ENCODE measurements at regions of chr21 and their contacts with region 1.

Region 1: GRCh38 chr21:34362136-34362444 is 1.7 kb upstream of the KCNE2 start:
- DNase-seq: no peak
- ATAC-seq: peak; percentile 14
- H3K4me3 ChIP-seq: no peak overlapping the region
- H3K4me3 Mint-ChIP-seq: peak overlapping the region in 4 of 10 donors; percentile 4 to 70 (median 14)
- H3K27ac ChIP-seq: no peak overlapping the region
- H3K27ac Mint-ChIP-seq: no peak overlapping the region
- H3K4me1 ChIP-seq: no peaks in the 10 kb centered on the region
- H3K4me1 Mint-ChIP-seq: peaks cover 0 to 11% (median 7%) of the 10 kb centered on the region in 7 donors
- H3K27me3 ChIP-seq: no peaks in the 10 kb centered on the region
- H3K27me3 Mint-ChIP-seq: peaks cover 5 to 30% (median 19%) of the 10 kb centered on the region in 5 donors

Region 2: DNA sequence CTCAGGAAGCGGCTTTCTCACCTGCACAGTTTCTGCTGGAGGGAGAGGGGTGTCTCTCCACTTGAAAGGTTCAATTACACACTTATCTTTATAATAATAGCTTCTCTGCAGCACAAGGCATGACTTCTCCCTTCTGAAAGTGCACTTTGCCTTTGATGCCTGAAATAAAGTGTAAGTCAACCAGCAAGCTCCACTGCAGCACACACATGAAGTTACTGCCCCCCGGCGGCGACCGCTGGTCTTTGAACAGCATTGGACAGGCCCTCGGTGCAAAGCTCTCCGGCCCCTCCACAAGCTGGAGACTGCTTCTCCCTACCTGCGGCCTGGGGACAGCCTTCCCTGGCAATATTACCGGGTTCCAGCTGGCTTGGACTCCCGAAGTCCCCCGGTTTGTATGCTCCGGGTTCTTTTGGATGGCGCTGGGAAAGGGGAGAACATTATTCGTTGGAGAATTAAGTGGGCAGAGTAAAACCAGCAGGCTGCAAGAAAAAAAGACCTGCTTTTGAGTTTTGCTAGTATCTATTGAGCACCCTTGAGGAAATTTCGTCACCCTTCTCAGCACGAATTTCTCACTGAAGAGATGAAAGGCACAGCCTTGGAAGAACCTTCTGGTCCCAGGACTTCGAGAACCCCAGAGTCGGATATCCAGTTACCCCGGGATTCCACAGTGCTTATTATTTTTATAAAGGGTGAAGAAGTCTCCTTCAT is 241.1 kb after region 1 on chr21:
- CTCF ChIA-PET with region 1: interaction called, 4 read pairs
- POLR2A ChIA-PET with region 1: no interaction called
- intact Hi-C with region 1: loop called in 1 of 2 experiments (anchors 1 kb)
- DNase-seq: peak; percentile 24 to 67 (median 40)
- ATAC-seq: peak; percentile 74
- H3K4me3 ChIP-seq: no peak overlapping the region
- H3K4me3 Mint-ChIP-seq: no peak overlapping the region
- H3K27ac ChIP-seq: no peak overlapping the region
- H3K27ac Mint-ChIP-seq: peak overlapping the region in 1 of 9 donors; percentile 11
- H3K4me1 ChIP-seq: no peaks in the 10 kb centered on the region
- H3K4me1 Mint-ChIP-seq: peaks cover 0 to 4% (median 0%) of the 10 kb centered on the region in 7 donors
- H3K27me3 ChIP-seq: no peaks in the 10 kb centered on the region
- H3K27me3 Mint-ChIP-seq: peaks cover 0 to 7% (median 0%) of the 10 kb centered on the region in 5 donors

Region 3: DNA sequence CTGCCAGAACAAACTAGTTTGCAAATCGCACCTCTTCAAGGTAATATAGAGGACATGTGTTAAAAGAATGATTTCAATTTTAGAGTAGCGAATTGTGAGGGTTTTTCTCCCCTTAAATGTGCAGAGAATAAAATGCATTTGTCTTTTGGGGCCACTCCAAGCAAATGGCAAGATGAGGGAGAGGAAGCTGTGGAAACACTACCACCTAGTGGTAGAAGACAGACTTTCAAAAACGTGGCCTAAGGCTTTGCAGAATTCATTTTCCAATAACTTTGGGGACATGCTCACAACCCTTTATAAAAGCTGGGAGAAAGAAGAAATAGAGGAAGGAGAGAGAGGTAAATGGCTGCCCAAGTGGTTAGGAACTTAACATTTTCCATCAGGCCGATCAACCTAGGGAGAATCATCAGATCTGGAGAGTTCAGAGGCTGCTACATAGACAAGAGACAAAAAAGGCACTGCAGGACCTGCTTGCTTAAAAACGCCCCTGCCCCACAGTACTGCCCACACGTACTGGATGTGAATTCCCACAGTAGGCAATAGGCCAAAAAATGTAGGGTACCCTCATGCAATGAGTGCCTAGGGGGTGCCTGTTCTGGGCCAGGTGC is 268.6 kb after region 1 on chr21:
- CTCF ChIA-PET with region 1: interaction called, 12 read pairs
- POLR2A ChIA-PET with region 1: interaction called, 3 read pairs
- intact Hi-C with region 1: loop called in 1 of 2 experiments (anchors 1 kb)
- DNase-seq: peak in 7 of 9 donors; percentile 23 to 65 (median 52)
- ATAC-seq: peak; percentile 77
- H3K4me3 ChIP-seq: no peak overlapping the region
- H3K4me3 Mint-ChIP-seq: no peak overlapping the region
- H3K27ac ChIP-seq: no peak overlapping the region
- H3K27ac Mint-ChIP-seq: no peak overlapping the region
- H3K4me1 ChIP-seq: no peaks in the 10 kb centered on the region
- H3K4me1 Mint-ChIP-seq: no peaks in the 10 kb centered on the region
- H3K27me3 ChIP-seq: no peaks in the 10 kb centered on the region
- H3K27me3 Mint-ChIP-seq: peaks cover 5 to 22% (median 14%) of the 10 kb centered on the region in 5 donors